HepG2 (cell line): ENCODE measurements at regions of chr2 and their contacts with region 1.

Region 1: DNA sequence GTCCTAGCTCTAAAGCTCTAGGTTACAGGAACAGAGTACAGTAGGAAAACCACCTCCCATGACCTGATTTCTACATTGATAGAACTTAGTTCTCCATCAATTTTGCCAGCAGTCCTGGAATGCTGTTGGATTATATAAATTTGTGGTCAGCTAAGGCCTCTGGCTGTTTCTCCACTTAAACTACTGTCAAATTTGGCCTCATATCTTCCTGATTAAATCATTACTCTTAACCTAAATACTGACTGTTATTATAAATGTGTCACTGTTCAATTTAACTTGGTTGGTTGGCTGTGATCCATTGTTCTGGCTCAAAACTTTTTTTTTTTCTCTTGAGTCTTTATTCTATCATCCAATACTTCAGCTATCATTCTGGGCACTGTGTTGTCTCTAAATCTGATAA is 71.2 kb downstream of the TGFA start:
- DNase-seq: no peak
- ATAC-seq: no peak
- H3K4me3 ChIP-seq: no peak overlapping the region
- H3K27ac ChIP-seq: no peak overlapping the region
- H3K4me1 ChIP-seq: peaks cover 6% of the 10 kb centered on the region
- H3K27me3 ChIP-seq: no peaks in the 10 kb centered on the region
- CTCF ChIP-seq: no peak
- EP300 ChIP-seq: no peak
- POLR2A ChIP-seq: no peak
- RAD21 ChIP-seq: no peak

Region 2: DNA sequence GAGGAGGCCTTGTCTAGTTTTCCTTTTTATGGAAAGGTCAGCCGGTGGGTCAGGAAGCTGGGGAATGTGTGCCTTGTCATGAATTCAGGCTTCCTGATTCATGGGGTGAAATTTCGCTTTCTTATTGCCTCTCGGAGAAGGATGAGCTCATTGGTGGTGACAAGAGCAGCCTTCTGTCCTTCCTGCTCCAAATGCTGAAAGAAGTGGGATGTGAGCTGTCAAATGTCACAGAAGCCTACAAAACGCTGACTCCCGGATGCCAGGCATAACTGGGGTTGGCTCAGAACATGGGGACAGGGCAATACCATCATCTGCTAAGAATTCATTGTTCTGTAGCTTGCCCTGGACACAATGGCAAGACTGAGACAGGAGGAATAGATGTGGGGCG is 124.7 kb before region 1 on chr2:
- CTCF ChIA-PET with region 1: no interaction called
- POLR2A ChIA-PET with region 1: no interaction called
- in situ Hi-C with region 1: no loop called
- intact Hi-C with region 1: no loop called
- DNase-seq: peak; percentile 14
- ATAC-seq: no peak
- H3K4me3 ChIP-seq: no peak overlapping the region
- H3K27ac ChIP-seq: no peak overlapping the region
- H3K4me1 ChIP-seq: peaks cover 8% of the 10 kb centered on the region; the same call in 1 of the 2 replicates
- H3K27me3 ChIP-seq: peaks cover 0 to 2% of the 10 kb centered on the region in 2 experiments; a peak in 1 of 5 replicates
- CTCF ChIP-seq: no peak
- EP300 ChIP-seq: no peak
- POLR2A ChIP-seq: no peak
- RAD21 ChIP-seq: no peak

Region 3: DNA sequence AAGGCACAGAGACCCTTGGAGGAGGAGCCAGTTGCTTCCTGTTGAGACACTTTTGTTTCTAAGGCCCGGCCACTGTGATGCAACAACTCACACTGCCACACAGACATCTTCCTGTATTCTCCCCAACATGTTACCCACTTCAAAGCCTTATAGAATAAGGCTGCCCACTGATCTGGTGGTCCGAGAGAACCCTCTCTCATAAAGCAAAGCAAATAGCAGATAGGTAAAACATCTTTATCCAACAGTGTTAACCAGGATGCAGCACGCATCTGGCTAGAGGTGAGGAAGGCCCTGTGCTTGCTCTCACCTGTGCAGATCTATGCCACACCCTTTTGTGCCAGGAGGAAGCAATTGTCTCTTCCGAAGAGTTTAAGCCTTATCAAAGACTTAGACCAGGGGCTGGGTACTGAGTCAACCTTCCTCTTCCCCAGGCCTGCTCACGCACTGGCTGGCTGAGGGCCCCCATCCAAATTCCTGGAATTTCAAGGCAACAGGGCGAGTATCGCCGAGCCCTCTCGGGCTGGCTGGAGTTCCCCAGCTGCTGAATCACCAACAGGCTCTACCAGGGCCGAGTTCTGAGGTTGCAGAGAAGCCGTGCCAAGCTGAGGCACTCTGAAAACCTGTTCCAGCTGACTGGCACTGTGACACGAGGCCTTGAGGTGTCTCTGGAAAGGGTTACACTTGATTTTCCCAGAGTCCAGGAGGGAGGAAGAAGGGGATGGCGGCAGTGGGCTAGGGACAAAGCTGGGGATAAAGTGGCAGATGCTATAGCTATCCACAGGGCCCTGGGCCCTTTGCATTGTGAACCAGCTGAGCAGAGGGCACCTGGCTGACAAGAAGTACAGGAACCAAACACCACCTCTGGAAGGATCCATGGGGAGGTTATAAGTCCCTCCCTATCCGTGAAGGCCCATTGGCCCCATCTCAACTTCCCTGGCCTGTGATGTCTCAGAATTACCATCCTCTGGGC is 41.9 kb after region 1 on chr2:
- CTCF ChIA-PET with region 1: no interaction called
- POLR2A ChIA-PET with region 1: no interaction called
- in situ Hi-C with region 1: no loop called
- intact Hi-C with region 1: no loop called
- DNase-seq: peak; percentile 40
- ATAC-seq: peak; percentile 36
- H3K4me3 ChIP-seq: 0 out of 6 replicates have a peak overlapping the region, but pooled peaks of 1 of the 3 experiments have one; percentile 11
- H3K27ac ChIP-seq: no peak overlapping the region
- H3K4me1 ChIP-seq: peaks cover 51% of the 10 kb centered on the region
- H3K27me3 ChIP-seq: no peaks in the 10 kb centered on the region
- CTCF ChIP-seq: no peak
- EP300 ChIP-seq: no peak
- POLR2A ChIP-seq: no peak
- RAD21 ChIP-seq: no peak

Region 4: GRCh38 chr2:70616168-70616694 is 133.8 kb after region 1 on chr2:
- CTCF ChIA-PET with region 1: no interaction called
- POLR2A ChIA-PET with region 1: no interaction called
- in situ Hi-C with region 1: no loop called
- intact Hi-C with region 1: loop called (anchors 1 kb)
- DNase-seq: no peak
- ATAC-seq: no peak; the same call in 2 of the 3 replicates
- H3K4me3 ChIP-seq: no peak overlapping the region
- H3K27ac ChIP-seq: no peak overlapping the region
- H3K4me1 ChIP-seq: no peaks in the 10 kb centered on the region
- H3K27me3 ChIP-seq: peaks cover 0 to 37% of the 10 kb centered on the region in 2 experiments; a peak in 3 of 5 replicates
- CTCF ChIP-seq: no peak
- EP300 ChIP-seq: no peak
- POLR2A ChIP-seq: no peak
- RAD21 ChIP-seq: no peak